B cell (primary cell): ENCODE measurements at regions of chr14 and their contacts with region 1.

Region 1: DNA sequence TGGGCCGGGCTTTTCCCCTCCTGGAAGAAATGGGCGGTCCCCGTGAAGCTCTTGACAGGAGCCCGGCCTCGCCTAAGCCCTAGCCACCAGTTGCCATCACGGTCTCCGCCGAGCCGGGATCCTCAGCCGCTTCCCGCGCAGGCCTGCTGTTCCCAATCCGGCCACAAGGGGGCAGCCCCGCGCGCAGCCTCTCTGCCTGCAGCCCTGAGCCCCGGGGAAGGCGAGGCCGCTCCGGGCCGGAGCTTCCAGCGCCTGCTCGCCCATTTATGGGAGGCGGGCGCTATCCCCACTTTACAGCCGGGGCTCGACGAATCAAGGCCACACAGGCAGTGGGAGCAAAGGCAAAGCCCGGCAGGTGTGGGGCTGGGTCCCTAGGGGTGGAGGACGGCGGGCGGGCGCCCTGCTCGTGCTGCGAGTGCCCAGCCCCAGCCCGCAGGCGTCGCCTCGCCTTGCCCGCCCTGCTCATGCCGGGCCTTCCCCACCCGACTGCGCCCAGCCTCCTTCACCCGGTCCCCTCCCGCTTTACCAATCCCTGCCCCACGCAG is 61.5 kb downstream of the LGMN start:
- DNase-seq: peak; percentile 35
- ATAC-seq: peak; percentile 82
- H3K4me3 ChIP-seq: no peak overlapping the region
- H3K4me3 Mint-ChIP-seq: no peak overlapping the region
- H3K27ac ChIP-seq: peak overlapping the region in 1 of 2 donors; percentile 56
- H3K27ac Mint-ChIP-seq: no peak overlapping the region
- H3K4me1 ChIP-seq: no peaks in the 10 kb centered on the region
- H3K4me1 Mint-ChIP-seq: peaks cover 2% of the 10 kb centered on the region
- H3K27me3 ChIP-seq: no peaks in the 10 kb centered on the region
- H3K27me3 Mint-ChIP-seq: no peaks in the 10 kb centered on the region
- CTCF ChIP-seq: peak; percentile 98

Region 2: DNA sequence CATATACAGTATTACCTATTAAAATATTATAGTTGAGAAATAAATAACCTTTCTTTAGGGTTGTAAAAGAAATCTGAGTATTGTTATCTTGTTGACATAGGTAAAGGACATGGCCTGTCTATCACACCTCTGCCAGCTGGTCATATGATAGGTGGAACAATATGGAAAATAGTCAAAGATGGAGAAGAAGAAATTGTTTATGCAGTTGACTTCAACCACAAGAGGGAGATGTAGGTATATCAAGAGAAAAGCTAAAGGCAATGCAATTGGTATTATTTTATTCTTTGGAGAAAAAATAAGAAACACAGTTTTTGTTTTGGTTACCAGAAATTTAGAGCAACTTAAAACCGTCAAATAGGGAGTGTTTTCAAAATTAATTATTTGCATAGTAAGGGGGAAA is 551.7 kb before region 1 on chr14:
- CTCF ChIA-PET with region 1: interaction called, 6 read pairs
- POLR2A ChIA-PET with region 1: no interaction called
- intact Hi-C with region 1: loop called (anchors 10 kb)
- DNase-seq: peak; percentile 29
- ATAC-seq: no peak
- H3K4me3 ChIP-seq: no peak overlapping the region
- H3K4me3 Mint-ChIP-seq: no peak overlapping the region
- H3K27ac ChIP-seq: no peak overlapping the region
- H3K27ac Mint-ChIP-seq: no peak overlapping the region
- H3K4me1 ChIP-seq: no peaks in the 10 kb centered on the region
- H3K4me1 Mint-ChIP-seq: no peaks in the 10 kb centered on the region
- H3K27me3 ChIP-seq: no peaks in the 10 kb centered on the region
- H3K27me3 Mint-ChIP-seq: no peaks in the 10 kb centered on the region
- CTCF ChIP-seq: peak; percentile 46

Region 3: GRCh38 chr14:92600318-92601053 is 86.5 kb before region 1 on chr14:
- CTCF ChIA-PET with region 1: interaction called, 29 read pairs
- POLR2A ChIA-PET with region 1: no interaction called
- intact Hi-C with region 1: no loop called
- DNase-seq: no peak
- ATAC-seq: no peak
- H3K4me3 ChIP-seq: no peak overlapping the region
- H3K4me3 Mint-ChIP-seq: no peak overlapping the region
- H3K27ac ChIP-seq: no peak overlapping the region
- H3K27ac Mint-ChIP-seq: peak overlapping the region; percentile 2
- H3K4me1 ChIP-seq: peaks cover 0 to 13% of the 10 kb centered on the region in 2 donors
- H3K4me1 Mint-ChIP-seq: peaks cover 38% of the 10 kb centered on the region
- H3K27me3 ChIP-seq: no peaks in the 10 kb centered on the region
- H3K27me3 Mint-ChIP-seq: no peaks in the 10 kb centered on the region
- CTCF ChIP-seq: no peak

Region 4: GRCh38 chr14:92704036-92704804 is 17.2 kb after region 1 on chr14:
- CTCF ChIA-PET with region 1: interaction called, 10 read pairs
- POLR2A ChIA-PET with region 1: interaction called, 4 read pairs
- intact Hi-C with region 1: no loop called
- DNase-seq: peak; percentile 88
- ATAC-seq: peak; percentile 98
- H3K4me3 ChIP-seq: peak overlapping the region in 2 of 5 experiments; percentile 17 to 22
- H3K4me3 Mint-ChIP-seq: peak overlapping the region; percentile 78
- H3K27ac ChIP-seq: peak overlapping the region; percentile 71 to 91
- H3K27ac Mint-ChIP-seq: peak overlapping the region; percentile 86
- H3K4me1 ChIP-seq: peaks cover 40 to 50% of the 10 kb centered on the region in 2 donors
- H3K4me1 Mint-ChIP-seq: peaks cover 56% of the 10 kb centered on the region
- H3K27me3 ChIP-seq: no peaks in the 10 kb centered on the region
- H3K27me3 Mint-ChIP-seq: no peaks in the 10 kb centered on the region
- CTCF ChIP-seq: no peak

Region 5: DNA sequence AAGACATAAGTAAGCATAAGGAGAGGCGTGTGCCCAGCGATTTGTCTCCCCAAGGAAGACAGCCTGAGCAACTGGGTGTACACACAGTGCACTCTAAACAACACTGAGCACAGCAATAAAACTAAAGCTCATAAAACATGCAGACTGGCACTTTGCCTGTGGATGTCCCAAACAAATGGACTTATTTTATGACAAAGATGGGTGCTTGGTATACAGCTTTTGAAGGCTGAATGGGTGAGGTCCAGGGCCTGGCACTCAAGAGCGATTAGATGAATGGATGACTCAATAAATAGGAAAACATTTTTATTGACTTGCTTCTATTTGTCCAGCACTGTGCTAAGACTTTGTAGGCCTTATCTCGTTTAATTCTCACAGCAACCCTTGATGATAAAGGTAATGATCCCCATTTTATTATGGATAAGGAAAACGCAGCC is 32.9 kb after region 1 on chr14:
- CTCF ChIA-PET with region 1: interaction called, 17 read pairs
- POLR2A ChIA-PET with region 1: no interaction called
- intact Hi-C with region 1: no loop called
- DNase-seq: no peak
- ATAC-seq: no peak
- H3K4me3 ChIP-seq: no peak overlapping the region
- H3K4me3 Mint-ChIP-seq: no peak overlapping the region
- H3K27ac ChIP-seq: no peak overlapping the region
- H3K27ac Mint-ChIP-seq: no peak overlapping the region
- H3K4me1 ChIP-seq: no peaks in the 10 kb centered on the region
- H3K4me1 Mint-ChIP-seq: peaks cover 7% of the 10 kb centered on the region
- H3K27me3 ChIP-seq: no peaks in the 10 kb centered on the region
- H3K27me3 Mint-ChIP-seq: no peaks in the 10 kb centered on the region
- CTCF ChIP-seq: no peak

Region 6: GRCh38 chr14:92783816-92784431 is 97.0 kb after region 1 on chr14:
- CTCF ChIA-PET with region 1: interaction called, 45 read pairs
- POLR2A ChIA-PET with region 1: interaction called, 14 read pairs
- intact Hi-C with region 1: loop called (anchors 2 kb)
- DNase-seq: peak; percentile 80
- ATAC-seq: peak; percentile 77
- H3K4me3 ChIP-seq: no peak overlapping the region
- H3K4me3 Mint-ChIP-seq: no peak overlapping the region
- H3K27ac ChIP-seq: no peak overlapping the region
- H3K27ac Mint-ChIP-seq: no peak overlapping the region
- H3K4me1 ChIP-seq: peaks cover 3 to 6% of the 10 kb centered on the region in 2 donors
- H3K4me1 Mint-ChIP-seq: peaks cover 15% of the 10 kb centered on the region
- H3K27me3 ChIP-seq: no peaks in the 10 kb centered on the region
- H3K27me3 Mint-ChIP-seq: no peaks in the 10 kb centered on the region
- CTCF ChIP-seq: peak; percentile 83